ENCODE measurements at regions of chr12 and their contacts with region 1.

Region 1: DNA sequence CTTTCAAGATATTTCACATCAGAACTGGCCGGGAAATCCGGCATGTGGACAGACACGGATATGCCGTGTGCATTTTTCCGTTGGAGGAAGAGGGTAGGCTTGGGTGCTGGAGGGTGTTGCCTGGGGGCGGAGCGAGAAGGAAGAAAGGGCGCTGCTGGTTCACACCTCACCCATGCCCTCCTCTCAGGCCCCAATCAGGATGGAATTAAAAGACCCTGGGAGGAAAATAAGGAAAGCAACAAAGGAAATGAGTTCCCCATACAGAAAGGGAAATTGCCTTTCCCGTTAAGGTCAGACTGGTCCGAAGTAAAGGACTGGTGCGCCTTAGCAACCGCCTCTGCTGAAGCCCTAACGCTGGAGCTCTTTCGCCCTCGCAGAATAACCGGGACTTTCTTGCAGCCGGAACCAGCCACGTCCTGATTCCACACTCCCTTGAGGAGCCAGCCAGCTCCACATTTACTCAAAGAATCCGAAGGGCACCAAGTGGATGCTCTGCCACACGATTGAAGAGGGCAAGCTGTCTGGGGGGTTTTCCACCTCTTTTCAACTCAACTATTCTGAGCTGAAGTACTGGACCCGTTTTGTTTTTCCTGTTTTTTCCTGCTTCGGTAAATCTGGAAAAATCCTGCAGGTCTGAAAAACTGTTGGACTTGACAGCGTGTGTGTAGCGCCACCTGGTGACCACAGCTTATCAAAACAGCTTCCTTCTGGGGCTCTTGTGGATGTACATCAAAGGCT is 37.7 kb upstream of the BCL2L14 start:
- DNase-seq: peak; percentile 46 to 90 (median 66)
- ATAC-seq: peak; percentile 84
- H3K4me3 ChIP-seq: peak overlapping the region; percentile 62
- H3K4me3 Mint-ChIP-seq: peak overlapping the region; percentile 83
- H3K27ac ChIP-seq: peak overlapping the region in 1 of 2 donors; percentile 41
- H3K27ac Mint-ChIP-seq: peak overlapping the region; percentile 84
- H3K4me1 ChIP-seq: peaks cover 19% of the 10 kb centered on the region
- H3K4me1 Mint-ChIP-seq: peaks cover 22% of the 10 kb centered on the region
- H3K27me3 ChIP-seq: no peaks in the 10 kb centered on the region
- H3K27me3 Mint-ChIP-seq: no peaks in the 10 kb centered on the region
- CTCF ChIP-seq: peak; percentile 90

Region 2: DNA sequence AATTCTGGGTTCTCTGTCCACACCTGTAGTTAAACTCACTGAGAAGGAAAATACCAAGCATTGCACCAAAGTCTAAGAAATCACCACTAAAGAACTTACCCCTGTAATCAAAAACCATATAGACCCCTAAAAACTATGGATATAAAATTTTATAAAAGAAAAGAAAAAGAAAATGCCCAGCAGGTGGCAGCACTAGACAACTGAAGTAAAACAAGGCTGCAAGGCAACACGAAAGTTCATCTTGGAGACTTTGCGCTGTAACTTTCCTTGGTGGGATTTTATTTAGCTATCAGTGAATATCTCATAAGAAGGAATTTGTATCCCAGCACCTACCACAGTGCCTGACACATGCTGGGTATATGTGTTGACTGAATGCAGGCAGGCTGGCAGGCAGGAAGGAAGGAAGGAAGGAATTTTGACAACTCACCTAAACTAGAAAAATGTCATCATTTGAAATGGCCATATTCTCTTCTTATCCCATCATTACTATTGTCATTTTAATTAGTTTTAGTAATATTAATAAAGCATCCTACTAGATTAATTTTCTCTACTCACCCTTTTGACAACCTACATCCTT is 451.8 kb before region 1 on chr12:
- CTCF ChIA-PET with region 1: interaction called, 42 read pairs
- POLR2A ChIA-PET with region 1: interaction called, 22 read pairs
- intact Hi-C with region 1: loop called (anchors 1 kb)
- DNase-seq: peak; percentile 24 to 85 (median 60)
- ATAC-seq: no peak
- H3K4me3 ChIP-seq: no peak overlapping the region
- H3K4me3 Mint-ChIP-seq: no peak overlapping the region
- H3K27ac ChIP-seq: no peak overlapping the region
- H3K27ac Mint-ChIP-seq: no peak overlapping the region
- H3K4me1 ChIP-seq: peaks cover 3% of the 10 kb centered on the region
- H3K4me1 Mint-ChIP-seq: no peaks in the 10 kb centered on the region
- H3K27me3 ChIP-seq: no peaks in the 10 kb centered on the region
- H3K27me3 Mint-ChIP-seq: no peaks in the 10 kb centered on the region
- CTCF ChIP-seq: peak; percentile 82

Region 3: DNA sequence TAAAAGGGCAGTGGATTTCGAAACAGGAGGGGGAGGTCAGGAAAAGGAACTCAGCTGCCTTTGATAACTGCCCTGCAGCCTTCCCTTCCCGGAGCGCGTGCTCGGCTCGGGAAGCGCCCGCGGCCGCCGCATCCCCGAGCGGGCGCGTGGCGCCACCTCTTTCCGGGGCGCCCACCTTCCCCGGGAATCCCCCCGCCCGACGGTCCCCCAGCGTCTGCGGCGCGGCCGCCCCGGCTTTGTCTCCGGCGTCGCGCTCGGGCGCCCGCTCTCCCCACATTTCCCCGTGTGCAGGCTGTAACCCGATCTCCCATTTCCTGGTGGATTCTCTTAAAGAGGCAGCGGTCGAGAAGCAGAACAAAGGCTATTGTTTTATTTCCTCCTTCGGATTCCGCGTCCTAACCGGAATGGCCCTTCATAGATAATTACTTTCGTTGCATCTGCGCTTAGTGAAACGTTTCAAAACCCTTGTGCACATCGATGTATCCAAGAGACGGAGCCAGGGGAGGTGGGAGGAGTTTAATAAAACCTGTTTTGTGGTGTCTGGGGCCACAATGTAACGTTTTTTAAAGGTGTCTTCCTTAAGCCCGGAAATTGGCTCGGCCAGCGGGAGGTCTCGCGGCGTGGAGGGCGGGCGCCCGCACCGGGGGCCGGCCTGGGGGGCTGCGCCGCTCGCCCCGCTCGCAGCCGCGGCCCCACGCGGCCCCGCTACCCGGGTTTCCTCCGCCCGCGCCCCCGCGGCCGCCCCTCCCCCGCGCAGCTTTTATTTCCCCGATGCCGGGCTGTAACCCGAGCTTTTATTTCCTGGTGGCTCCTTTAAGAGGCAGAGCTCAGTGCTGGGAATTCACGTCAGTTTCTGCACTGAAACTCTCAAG is 384.0 kb before region 1 on chr12 and contains the start of gene ETV6:
- CTCF ChIA-PET with region 1: interaction called, 3 read pairs
- POLR2A ChIA-PET with region 1: interaction called, 10 read pairs
- intact Hi-C with region 1: loop called in 1 of 2 experiments (anchors 1 kb)
- DNase-seq: peak; percentile 41 to 88 (median 62)
- ATAC-seq: peak; percentile 62
- H3K4me3 ChIP-seq: peak within 1 kb of the TSS; percentile 97
- H3K4me3 Mint-ChIP-seq: peak within 1 kb of the TSS; percentile 98
- H3K27ac ChIP-seq: peak within 1 kb of the TSS; percentile 68 to 81
- H3K27ac Mint-ChIP-seq: peak within 1 kb of the TSS; percentile 92
- H3K4me1 ChIP-seq: peaks cover 26% of the 10 kb centered on the region
- H3K4me1 Mint-ChIP-seq: peaks cover 38% of the 10 kb centered on the region
- H3K27me3 ChIP-seq: no peaks in the 10 kb centered on the region
- H3K27me3 Mint-ChIP-seq: no peaks in the 10 kb centered on the region
- CTCF ChIP-seq: no peak
- total RNA-seq, gene ETV6: 28.5 to 30.2 TPM

Region 4: DNA sequence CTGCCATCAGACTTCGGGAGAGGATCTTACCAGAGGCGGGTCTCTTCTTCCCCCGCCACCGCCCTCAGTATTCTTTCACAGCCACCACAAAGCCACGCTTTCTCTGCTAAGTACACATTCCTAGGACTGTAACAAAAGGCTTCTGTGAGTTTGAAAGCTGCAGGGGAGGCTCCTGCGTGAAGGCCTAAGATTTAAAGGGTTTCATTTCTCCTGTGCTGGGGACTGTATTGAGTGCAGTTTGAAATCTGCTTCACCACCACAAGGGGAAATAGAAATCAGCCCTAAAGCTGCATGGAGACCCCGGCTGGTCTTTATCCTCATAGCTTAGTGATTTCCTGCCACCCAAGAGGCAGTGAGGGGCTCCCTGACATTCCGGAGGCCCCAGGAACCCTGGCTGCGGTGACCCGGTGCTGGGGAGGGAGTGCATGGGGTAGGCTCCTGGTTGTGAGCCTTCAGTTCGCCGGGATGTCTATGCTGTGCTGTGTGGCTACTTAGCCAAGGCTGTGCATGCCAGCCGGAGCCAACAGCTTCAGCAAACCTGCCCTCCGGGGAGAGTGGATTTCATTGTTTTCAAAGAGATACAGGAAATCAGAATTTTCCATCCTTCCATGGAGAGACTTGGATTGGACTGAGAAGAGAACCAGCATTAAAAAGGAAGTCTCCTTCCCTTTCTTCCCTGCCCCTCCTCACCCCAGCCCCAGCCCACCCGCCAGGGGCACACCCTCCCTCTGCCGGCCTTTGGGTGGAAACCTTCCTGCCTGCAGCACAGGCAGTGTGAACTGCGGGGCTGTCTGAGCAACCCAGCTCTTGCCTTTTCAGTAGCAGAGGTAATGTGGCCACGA is 220.2 kb before region 1 on chr12:
- CTCF ChIA-PET with region 1: interaction called, 4 read pairs
- POLR2A ChIA-PET with region 1: interaction called, 3 read pairs
- intact Hi-C with region 1: loop called in 1 of 2 experiments (anchors 10 kb)
- DNase-seq: peak in 8 of 14 experiments; percentile 12 to 49 (median 20)
- ATAC-seq: peak; percentile 60
- H3K4me3 ChIP-seq: peak overlapping the region; percentile 40
- H3K4me3 Mint-ChIP-seq: peak overlapping the region; percentile 56
- H3K27ac ChIP-seq: peak overlapping the region in 1 of 2 donors; percentile 7
- H3K27ac Mint-ChIP-seq: peak overlapping the region; percentile 51
- H3K4me1 ChIP-seq: peaks cover 29% of the 10 kb centered on the region
- H3K4me1 Mint-ChIP-seq: peaks cover 65% of the 10 kb centered on the region
- H3K27me3 ChIP-seq: no peaks in the 10 kb centered on the region
- H3K27me3 Mint-ChIP-seq: no peaks in the 10 kb centered on the region
- CTCF ChIP-seq: peak; percentile 16

Region 5: DNA sequence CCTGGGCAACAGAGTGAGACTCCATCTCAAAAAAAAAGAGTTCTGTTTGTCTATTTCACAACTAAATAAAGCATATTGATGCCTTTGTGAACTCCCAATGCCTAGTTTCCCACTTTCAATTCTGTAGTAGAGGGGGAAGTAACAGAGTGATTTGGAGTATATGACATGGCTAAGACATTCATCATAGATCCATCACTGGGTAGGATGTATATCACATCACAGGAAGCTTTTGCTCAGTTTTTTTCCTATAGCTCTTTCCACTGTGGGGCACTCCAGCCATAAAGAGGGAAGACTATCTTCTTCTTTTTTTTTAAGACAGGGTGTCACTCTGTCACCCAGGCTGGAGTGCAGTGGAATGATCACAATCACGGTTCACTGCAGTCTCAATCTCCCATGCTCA is 116.2 kb before region 1 on chr12:
- CTCF ChIA-PET with region 1: no interaction called
- POLR2A ChIA-PET with region 1: no interaction called
- intact Hi-C with region 1: no loop called
- DNase-seq: no peak
- ATAC-seq: no peak
- H3K4me3 ChIP-seq: no peak overlapping the region
- H3K4me3 Mint-ChIP-seq: no peak overlapping the region
- H3K27ac ChIP-seq: no peak overlapping the region
- H3K27ac Mint-ChIP-seq: no peak overlapping the region
- H3K4me1 ChIP-seq: no peaks in the 10 kb centered on the region
- H3K4me1 Mint-ChIP-seq: no peaks in the 10 kb centered on the region
- H3K27me3 ChIP-seq: no peaks in the 10 kb centered on the region
- H3K27me3 Mint-ChIP-seq: no peaks in the 10 kb centered on the region
- CTCF ChIP-seq: no peak

Region 6: GRCh38 chr12:11981121-11981733 is 51.8 kb before region 1 on chr12:
- CTCF ChIA-PET with region 1: interaction called, 17 read pairs
- POLR2A ChIA-PET with region 1: interaction called, 7 read pairs
- intact Hi-C with region 1: loop called in 1 of 2 experiments (anchors 1 kb)
- DNase-seq: peak in 13 of 14 experiments; percentile 9 to 93 (median 19)
- ATAC-seq: peak; percentile 84
- H3K4me3 ChIP-seq: peak overlapping the region; percentile 8
- H3K4me3 Mint-ChIP-seq: peak overlapping the region; percentile 1
- H3K27ac ChIP-seq: peak overlapping the region; percentile 54 to 77
- H3K27ac Mint-ChIP-seq: peak overlapping the region; percentile 67
- H3K4me1 ChIP-seq: peaks cover 32% of the 10 kb centered on the region
- H3K4me1 Mint-ChIP-seq: peaks cover 47% of the 10 kb centered on the region
- H3K27me3 ChIP-seq: no peaks in the 10 kb centered on the region
- H3K27me3 Mint-ChIP-seq: no peaks in the 10 kb centered on the region
- CTCF ChIP-seq: no peak

Region 7: GRCh38 chr12:12008931-12009611 is 23.9 kb before region 1 on chr12:
- CTCF ChIA-PET with region 1: interaction called, 28 read pairs
- POLR2A ChIA-PET with region 1: interaction called, 34 read pairs
- intact Hi-C with region 1: loop called (anchors 1 to 2 kb)
- DNase-seq: peak in 13 of 14 experiments; percentile 39 to 81 (median 45)
- ATAC-seq: peak; percentile 65
- H3K4me3 ChIP-seq: no peak overlapping the region
- H3K4me3 Mint-ChIP-seq: peak overlapping the region; percentile 78
- H3K27ac ChIP-seq: peak overlapping the region; percentile 74 to 76
- H3K27ac Mint-ChIP-seq: peak overlapping the region; percentile 96
- H3K4me1 ChIP-seq: peaks cover 63% of the 10 kb centered on the region
- H3K4me1 Mint-ChIP-seq: peaks cover 80% of the 10 kb centered on the region
- H3K27me3 ChIP-seq: no peaks in the 10 kb centered on the region
- H3K27me3 Mint-ChIP-seq: no peaks in the 10 kb centered on the region
- CTCF ChIP-seq: peak; percentile 24

Measured in CD4-positive, alpha-beta T cell (primary cell).